ENCODE measurements at regions of chr4 and their contacts with region 1.

Region 1: GRCh38 chr4:54487491-54487890 is 170.3 kb upstream of the KIT start:
- DNase-seq: no peak
- H3K4me3 ChIP-seq: no peak overlapping the region
- H3K27ac ChIP-seq: no peak overlapping the region
- H3K4me1 ChIP-seq: no peaks in the 10 kb centered on the region
- H3K27me3 ChIP-seq: no peaks in the 10 kb centered on the region
- CTCF ChIP-seq: no peak
- POLR2A ChIP-seq: no peak

Region 2: GRCh38 chr4:54539500-54540029 is 52.1 kb after region 1 on chr4:
- intact Hi-C with region 1: loop called (anchors 2 kb)
- DNase-seq: peak in 1 of 2 donors; percentile 61
- H3K4me3 ChIP-seq: peak overlapping the region; percentile 23 to 70 (median 49)
- H3K27ac ChIP-seq: peak overlapping the region in 1 of 2 donors; percentile 0
- H3K4me1 ChIP-seq: no peaks in the 10 kb centered on the region
- H3K27me3 ChIP-seq: no peaks in the 10 kb centered on the region
- CTCF ChIP-seq: no peak
- POLR2A ChIP-seq: no peak